Cardiac septum (tissue), 1 donor: ENCODE measurements at regions of chr12 and their contacts with region 1.

Region 1: GRCh38 chr12:78767264-78767981 is 97.2 kb upstream of the SYT1 start:
- DNase-seq: no peak

Region 2: DNA sequence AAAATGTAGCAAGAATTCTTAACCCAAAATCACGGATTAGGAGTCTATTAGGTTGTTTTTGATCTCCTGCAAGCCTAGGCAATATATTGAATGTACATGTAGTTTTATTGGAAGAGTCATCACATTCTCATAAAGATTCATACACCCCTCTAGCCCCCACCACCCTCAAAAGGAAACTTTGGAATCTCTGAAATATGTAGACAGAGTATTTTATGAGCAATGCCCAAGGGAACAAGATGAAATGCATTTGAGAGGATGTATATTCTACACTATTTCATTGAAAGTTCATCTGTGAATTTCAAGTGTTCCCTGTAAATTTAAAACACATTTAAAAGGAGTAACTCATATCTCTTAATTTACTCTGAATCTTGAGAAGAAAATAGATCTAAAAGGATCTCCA is 200.8 kb after region 1 on chr12:
- intact Hi-C with region 1: loop called (anchors 5 kb)
- DNase-seq: no peak